Aorta (tissue), 5 donors: ENCODE measurements at regions of chr2 and their contacts with region 1.

Region 1: DNA sequence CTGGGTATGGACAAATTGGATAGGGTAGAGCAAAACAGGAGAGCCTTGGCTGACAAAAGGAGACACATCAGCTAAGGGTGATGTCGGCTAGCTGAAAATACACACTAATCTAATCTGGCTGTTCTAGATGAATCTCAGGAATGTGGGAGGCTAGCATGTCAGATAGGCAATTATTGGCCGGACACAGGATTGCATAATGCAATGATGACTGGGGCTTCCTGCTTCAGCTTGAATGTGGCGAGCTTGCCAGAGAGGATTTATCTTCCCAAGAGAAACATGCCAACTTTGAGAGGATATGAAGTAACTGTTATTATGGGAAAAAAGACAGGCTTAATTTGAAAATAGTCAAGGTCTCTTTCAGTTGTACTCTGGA is 102.4 kb downstream of the TRIB2 start:
- DNase-seq: peak in 1 of 2 donors; percentile 83
- ATAC-seq: peak; percentile 93
- H3K4me3 ChIP-seq: no peak overlapping the region
- H3K27ac ChIP-seq: peak overlapping the region in 1 of 2 donors; percentile 33
- H3K4me1 ChIP-seq: peaks cover 0 to 2% of the 10 kb centered on the region in 2 donors
- H3K27me3 ChIP-seq: no peaks in the 10 kb centered on the region

Region 2: DNA sequence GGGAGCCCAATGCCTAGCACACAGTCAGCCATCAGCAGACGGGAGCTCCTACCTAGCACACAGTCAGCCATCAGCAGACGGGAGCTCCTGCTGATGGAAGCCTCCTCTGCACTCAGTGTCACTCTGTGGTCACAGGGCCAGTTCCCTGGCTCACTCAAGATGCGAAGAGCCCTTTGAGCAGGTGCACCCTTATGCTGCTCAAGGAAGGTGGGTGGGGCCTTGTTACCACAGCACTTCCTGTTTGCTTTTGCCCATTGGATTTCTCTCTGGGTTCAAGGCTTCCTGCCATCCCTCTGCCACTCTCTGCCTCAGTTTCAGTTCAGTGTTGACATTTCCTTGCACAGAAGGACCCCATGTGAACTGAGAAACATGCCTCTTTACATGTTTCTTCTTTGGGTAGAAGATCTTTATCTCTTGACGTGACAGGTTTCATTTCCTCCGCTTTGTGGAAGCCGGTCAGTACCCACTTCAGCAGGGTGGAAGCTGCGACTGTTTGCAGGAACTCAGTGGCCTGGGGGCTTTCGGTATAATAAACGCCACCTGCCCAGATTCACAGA is 90.8 kb before region 1 on chr2:
- intact Hi-C with region 1: loop called in 1 of 2 experiments (anchors 10 kb)
- DNase-seq: no peak
- ATAC-seq: no peak
- H3K4me3 ChIP-seq: no peak overlapping the region
- H3K27ac ChIP-seq: no peak overlapping the region
- H3K4me1 ChIP-seq: no peaks in the 10 kb centered on the region
- H3K27me3 ChIP-seq: no peaks in the 10 kb centered on the region

Region 3: DNA sequence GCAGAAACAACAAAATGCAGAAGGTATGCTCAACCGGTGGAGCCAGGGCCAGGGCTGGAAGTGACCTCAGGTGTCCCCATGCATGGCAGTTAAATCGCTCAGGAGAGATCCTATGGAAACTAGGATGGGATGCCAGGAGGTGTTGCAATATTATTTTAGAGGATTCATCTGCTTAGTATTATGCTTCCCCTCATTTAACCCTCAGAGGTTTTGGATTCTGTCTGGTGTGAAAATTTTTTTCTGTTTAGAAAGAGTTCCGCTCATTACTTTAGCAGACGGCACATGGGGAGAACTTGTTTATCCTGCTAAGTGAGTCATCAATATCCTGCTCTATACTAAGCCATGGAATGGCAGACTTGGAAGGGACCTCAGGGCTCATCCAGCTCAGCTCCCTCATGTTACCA is 59.8 kb before region 1 on chr2:
- intact Hi-C with region 1: no loop called
- DNase-seq: no peak
- ATAC-seq: no peak
- H3K4me3 ChIP-seq: no peak overlapping the region
- H3K27ac ChIP-seq: no peak overlapping the region
- H3K4me1 ChIP-seq: no peaks in the 10 kb centered on the region
- H3K27me3 ChIP-seq: no peaks in the 10 kb centered on the region

Region 4: DNA sequence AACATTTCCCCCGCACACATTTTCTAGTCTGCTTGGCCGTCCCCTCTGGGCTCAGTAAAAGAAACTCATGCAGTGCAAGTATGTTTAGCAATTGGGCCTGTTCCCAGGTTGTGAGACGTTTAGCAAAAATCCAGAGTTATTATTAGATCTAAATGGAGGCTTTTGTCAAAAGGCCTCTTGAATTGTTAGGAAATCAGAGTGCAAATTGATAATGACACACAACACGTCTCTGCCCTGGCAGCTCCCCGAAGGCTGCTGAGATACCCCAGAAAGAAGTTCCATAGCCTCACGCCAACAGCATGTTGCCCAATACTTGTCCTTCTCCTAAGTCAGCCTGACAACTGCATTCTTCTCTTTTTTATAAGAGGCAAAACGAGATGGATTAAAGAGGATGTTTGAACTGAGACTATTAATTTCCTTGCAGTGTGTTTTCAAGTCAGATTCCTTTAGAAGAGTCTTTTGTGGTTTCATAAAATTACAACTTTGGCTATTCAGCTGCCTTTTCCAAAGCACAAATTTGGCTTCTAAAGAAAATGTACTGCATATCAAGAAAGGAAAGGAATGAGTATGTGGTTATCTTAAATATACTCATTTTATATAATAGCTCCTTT is 99.9 kb after region 1 on chr2:
- intact Hi-C with region 1: loop called in 1 of 2 experiments (anchors 5 kb)
- DNase-seq: peak; percentile 78
- ATAC-seq: peak; percentile 77
- H3K4me3 ChIP-seq: peak overlapping the region in 1 of 2 donors; percentile 34
- H3K27ac ChIP-seq: peak overlapping the region; percentile 91 to 93
- H3K4me1 ChIP-seq: peaks cover 4 to 9% of the 10 kb centered on the region in 2 donors
- H3K27me3 ChIP-seq: no peaks in the 10 kb centered on the region